CD4-positive, alpha-beta memory T cell (primary cell): ENCODE measurements at regions of chr1 and their contacts with region 1.

Region 1: DNA sequence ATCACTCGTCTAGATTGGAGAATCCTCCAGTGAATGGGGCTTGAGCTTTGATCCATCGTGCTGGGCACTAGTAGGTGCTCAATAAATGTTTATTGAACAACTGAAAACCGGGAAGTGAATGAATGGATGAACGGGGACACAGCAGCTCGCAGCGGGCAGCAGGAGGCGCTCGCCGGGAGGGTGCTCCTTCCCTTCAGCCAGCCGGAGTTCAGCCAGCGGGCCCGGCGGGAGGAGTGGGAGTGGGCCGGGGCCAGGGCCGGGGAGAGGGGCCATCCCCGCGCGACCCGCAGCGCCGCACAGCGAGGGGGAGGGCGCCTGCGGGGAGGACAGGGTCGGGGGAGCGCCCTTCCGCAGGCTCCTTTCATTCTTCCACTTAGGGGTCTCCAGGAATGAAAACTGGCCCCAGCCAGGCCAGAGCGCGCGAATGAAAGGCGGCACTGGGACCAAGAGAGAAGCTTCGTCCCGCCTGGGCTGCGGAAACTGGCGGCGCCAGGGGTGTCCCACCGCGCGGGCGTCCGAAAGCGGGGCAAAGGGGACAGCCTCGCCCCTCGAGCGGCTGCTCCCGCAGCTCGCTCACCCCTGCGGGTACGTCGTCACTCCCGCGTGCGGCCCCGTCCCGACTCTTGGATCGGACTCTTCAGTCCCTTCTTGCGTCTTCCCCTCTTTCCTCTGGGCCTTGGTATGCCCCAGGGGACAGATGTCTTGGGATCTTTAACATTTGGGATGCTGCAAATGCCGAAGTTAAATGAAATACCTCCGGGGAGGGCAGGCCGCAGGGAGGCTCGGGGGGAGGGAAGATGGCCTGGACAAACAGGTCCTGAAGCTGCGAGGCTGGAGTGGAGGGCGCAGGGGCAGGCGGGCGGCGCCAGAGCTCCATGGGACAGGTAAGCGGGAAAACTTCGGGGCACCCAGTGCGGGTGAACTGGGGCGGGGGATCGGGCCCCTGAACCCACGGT is 3.6 kb upstream of the INAVA start:
- DNase-seq: no peak
- H3K4me3 ChIP-seq: peak overlapping the region; percentile 24 to 55
- H3K4me3 Mint-ChIP-seq: peak overlapping the region; percentile 59 to 84 (median 76)
- H3K27ac ChIP-seq: peak overlapping the region; percentile 28
- H3K27ac Mint-ChIP-seq: peak overlapping the region in 5 of 7 donors; percentile 42 to 88 (median 69)
- H3K4me1 ChIP-seq: peaks cover 59% of the 10 kb centered on the region
- H3K4me1 Mint-ChIP-seq: peaks cover 33 to 58% (median 45%) of the 10 kb centered on the region in 4 donors
- H3K27me3 ChIP-seq: no peaks in the 10 kb centered on the region
- H3K27me3 Mint-ChIP-seq: peaks cover 0 to 8% of the 10 kb centered on the region in 2 donors

Region 2: GRCh38 chr1:200866521-200866920 is 24.6 kb before region 1 on chr1:
- CTCF ChIA-PET with region 1: interaction called, 5 read pairs
- POLR2A ChIA-PET with region 1: interaction called, 16 read pairs
- intact Hi-C with region 1: loop called (anchors 2 kb)
- DNase-seq: no peak
- H3K4me3 ChIP-seq: no peak overlapping the region
- H3K4me3 Mint-ChIP-seq: peak overlapping the region in 3 of 8 donors; percentile 14 to 46 (median 39)
- H3K27ac ChIP-seq: no peak overlapping the region
- H3K27ac Mint-ChIP-seq: peak overlapping the region in 5 of 7 donors; percentile 46 to 83 (median 78)
- H3K4me1 ChIP-seq: peaks cover 71% of the 10 kb centered on the region
- H3K4me1 Mint-ChIP-seq: peaks cover 46 to 79% (median 58%) of the 10 kb centered on the region in 4 donors
- H3K27me3 ChIP-seq: no peaks in the 10 kb centered on the region
- H3K27me3 Mint-ChIP-seq: no peaks in the 10 kb centered on the region

Region 3: GRCh38 chr1:200877839-200878551 is 13.1 kb before region 1 on chr1:
- CTCF ChIA-PET with region 1: interaction called, 16 read pairs
- POLR2A ChIA-PET with region 1: interaction called, 34 read pairs
- intact Hi-C with region 1: no loop called
- DNase-seq: peak in 2 of 5 donors; percentile 42 to 77
- H3K4me3 ChIP-seq: peak overlapping the region in 1 of 2 donors; percentile 33
- H3K4me3 Mint-ChIP-seq: peak overlapping the region; percentile 39 to 78 (median 66)
- H3K27ac ChIP-seq: peak overlapping the region; percentile 47
- H3K27ac Mint-ChIP-seq: peak overlapping the region; percentile 69 to 93 (median 90)
- H3K4me1 ChIP-seq: peaks cover 45% of the 10 kb centered on the region
- H3K4me1 Mint-ChIP-seq: peaks cover 29 to 63% (median 53%) of the 10 kb centered on the region in 4 donors
- H3K27me3 ChIP-seq: no peaks in the 10 kb centered on the region
- H3K27me3 Mint-ChIP-seq: peaks cover 0 to 13% of the 10 kb centered on the region in 2 donors

Region 4: DNA sequence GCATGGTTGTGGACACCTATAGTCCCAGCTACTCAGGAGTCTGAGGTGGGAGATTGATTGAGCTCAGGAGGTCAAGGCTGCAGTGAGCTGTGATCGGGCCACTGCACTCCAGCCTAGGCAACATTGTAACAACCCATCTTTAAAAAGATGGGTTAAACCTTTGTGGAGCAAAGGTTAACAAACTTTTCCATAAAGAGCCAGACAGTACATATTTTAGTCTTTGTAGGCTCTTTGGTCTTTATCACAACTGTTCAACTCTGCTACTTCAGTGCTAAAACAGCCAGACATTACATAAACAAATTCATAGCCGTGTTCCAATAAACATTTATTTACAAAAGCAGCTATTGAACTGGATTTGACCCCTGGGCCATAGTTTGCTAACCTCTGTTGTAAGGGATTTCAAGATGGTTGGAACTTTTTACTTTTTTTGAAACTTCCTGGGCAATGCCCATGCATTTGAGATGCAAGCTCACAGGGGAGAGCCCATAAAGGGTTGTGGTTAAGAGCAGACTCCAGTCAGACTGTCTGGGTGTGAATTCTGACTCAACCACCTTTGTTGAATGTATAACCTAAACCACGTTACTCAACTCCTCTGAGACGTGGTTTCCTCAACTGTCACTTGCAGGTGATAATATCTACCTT is 14.4 kb after region 1 on chr1:
- CTCF ChIA-PET with region 1: interaction called, 3 read pairs
- POLR2A ChIA-PET with region 1: interaction called, 7 read pairs
- intact Hi-C with region 1: loop called (anchors 2 kb)
- DNase-seq: peak; percentile 56 to 87 (median 67)
- H3K4me3 ChIP-seq: no peak overlapping the region
- H3K4me3 Mint-ChIP-seq: peak overlapping the region in 2 of 8 donors; percentile 20 to 47
- H3K27ac ChIP-seq: no peak overlapping the region
- H3K27ac Mint-ChIP-seq: peak overlapping the region in 5 of 7 donors; percentile 8 to 79 (median 53)
- H3K4me1 ChIP-seq: peaks cover 27% of the 10 kb centered on the region
- H3K4me1 Mint-ChIP-seq: peaks cover 8 to 24% (median 14%) of the 10 kb centered on the region in 4 donors
- H3K27me3 ChIP-seq: no peaks in the 10 kb centered on the region
- H3K27me3 Mint-ChIP-seq: peaks cover 0 to 3% of the 10 kb centered on the region in 2 donors